ENCODE measurements at regions of chr5 and their contacts with region 1.

Region 1: GRCh38 chr5:91175708-91176107 is 207.4 kb downstream of the ARRDC3 start:
- DNase-seq: no peak
- ATAC-seq: no peak
- H3K4me3 Mint-ChIP-seq: no peak overlapping the region
- H3K27ac Mint-ChIP-seq: no peak overlapping the region
- H3K4me1 Mint-ChIP-seq: peaks cover 11% of the 10 kb centered on the region
- H3K27me3 Mint-ChIP-seq: peaks cover 2% of the 10 kb centered on the region

Region 2: DNA sequence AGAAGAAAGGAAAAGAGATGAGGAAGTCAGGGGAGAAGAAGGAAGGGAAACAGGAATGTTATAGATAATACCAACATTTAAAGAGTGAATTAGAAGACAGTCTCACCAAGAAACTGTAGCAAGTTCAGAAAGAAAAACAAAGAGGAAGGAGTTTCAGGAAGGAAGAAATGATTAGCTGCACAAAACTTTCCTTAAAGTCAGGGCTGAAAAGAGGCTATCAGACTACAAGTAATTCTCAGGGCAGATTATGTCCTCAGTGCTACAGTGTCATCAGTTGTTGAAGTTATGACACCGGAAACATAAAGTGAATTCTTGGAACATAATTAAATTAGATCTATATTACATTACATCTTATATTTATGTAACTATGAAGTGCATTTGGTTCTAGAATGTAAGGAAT is 19.5 kb before region 1 on chr5:
- CTCF ChIA-PET with region 1: interaction called, 3 read pairs
- POLR2A ChIA-PET with region 1: no interaction called
- intact Hi-C with region 1: loop called in 1 of 2 experiments (anchors 2 kb)
- DNase-seq: no peak
- ATAC-seq: no peak
- H3K4me3 Mint-ChIP-seq: no peak overlapping the region
- H3K27ac Mint-ChIP-seq: no peak overlapping the region
- H3K4me1 Mint-ChIP-seq: no peaks in the 10 kb centered on the region
- H3K27me3 Mint-ChIP-seq: no peaks in the 10 kb centered on the region

Region 3: GRCh38 chr5:91464886-91465646 is 289.4 kb after region 1 on chr5:
- CTCF ChIA-PET with region 1: no interaction called
- POLR2A ChIA-PET with region 1: no interaction called
- intact Hi-C with region 1: no loop called
- DNase-seq: no peak
- ATAC-seq: no peak
- H3K4me3 Mint-ChIP-seq: no peak overlapping the region
- H3K27ac Mint-ChIP-seq: no peak overlapping the region
- H3K4me1 Mint-ChIP-seq: peaks cover 15% of the 10 kb centered on the region
- H3K27me3 Mint-ChIP-seq: peaks cover 5% of the 10 kb centered on the region

Measured in activated CD4-positive, alpha-beta T cell treated with anti-CD3 and anti-CD28 coated beads for 36 hours (primary cell).